GM12878 (cell line): ENCODE measurements at regions of chr15 and their contacts with region 1.

Region 1: GRCh38 chr15:29225534-29226234 is 43.9 kb downstream of the NSMCE3 start:
- DNase-seq: no peak
- ATAC-seq: no peak
- H3K4me3 ChIP-seq: no peak overlapping the region
- H3K27ac ChIP-seq: no peak overlapping the region
- H3K4me1 ChIP-seq: no peaks in the 10 kb centered on the region
- H3K27me3 ChIP-seq: no peaks in the 10 kb centered on the region; a peak in 1 of 4 replicates
- CTCF ChIP-seq: no peak
- EP300 ChIP-seq: no peak
- POLR2A ChIP-seq: no peak
- RAD21 ChIP-seq: no peak

Region 2: DNA sequence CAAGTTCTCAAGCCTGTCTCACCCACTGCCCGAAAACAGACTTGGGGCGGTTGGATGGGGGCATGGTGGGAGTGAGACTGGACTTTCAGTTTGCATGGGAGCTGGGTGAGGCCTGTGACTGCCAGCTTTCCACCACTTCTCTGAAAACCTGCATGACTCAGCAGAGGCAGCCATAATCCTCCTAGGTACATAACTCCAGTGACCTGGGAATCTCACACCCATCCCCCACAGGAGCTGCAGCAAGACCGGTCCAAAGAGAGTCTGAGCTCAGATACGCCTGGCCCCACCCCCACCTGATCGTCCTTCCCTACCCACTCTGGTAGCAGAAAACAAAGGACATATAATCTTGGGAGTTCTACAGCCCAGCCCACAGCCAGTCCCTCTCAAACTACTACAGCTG is 63.3 kb before region 1 on chr15:
- CTCF ChIA-PET with region 1: no interaction called
- POLR2A ChIA-PET with region 1: no interaction called
- RAD21 ChIA-PET with region 1: no interaction called
- SMC1A ChIA-PET with region 1: no interaction called
- in situ Hi-C with region 1: loop called (anchors 10 kb)
- intact Hi-C with region 1: no loop called
- DNase-seq: no peak
- ATAC-seq: no peak
- H3K4me3 ChIP-seq: no peak overlapping the region
- H3K27ac ChIP-seq: no peak overlapping the region
- H3K4me1 ChIP-seq: no peaks in the 10 kb centered on the region
- H3K27me3 ChIP-seq: no peaks in the 10 kb centered on the region
- CTCF ChIP-seq: no peak
- EP300 ChIP-seq: no peak
- POLR2A ChIP-seq: no peak
- RAD21 ChIP-seq: no peak